ENCODE measurements at regions of chr5 and their contacts with region 1.

Region 1: DNA sequence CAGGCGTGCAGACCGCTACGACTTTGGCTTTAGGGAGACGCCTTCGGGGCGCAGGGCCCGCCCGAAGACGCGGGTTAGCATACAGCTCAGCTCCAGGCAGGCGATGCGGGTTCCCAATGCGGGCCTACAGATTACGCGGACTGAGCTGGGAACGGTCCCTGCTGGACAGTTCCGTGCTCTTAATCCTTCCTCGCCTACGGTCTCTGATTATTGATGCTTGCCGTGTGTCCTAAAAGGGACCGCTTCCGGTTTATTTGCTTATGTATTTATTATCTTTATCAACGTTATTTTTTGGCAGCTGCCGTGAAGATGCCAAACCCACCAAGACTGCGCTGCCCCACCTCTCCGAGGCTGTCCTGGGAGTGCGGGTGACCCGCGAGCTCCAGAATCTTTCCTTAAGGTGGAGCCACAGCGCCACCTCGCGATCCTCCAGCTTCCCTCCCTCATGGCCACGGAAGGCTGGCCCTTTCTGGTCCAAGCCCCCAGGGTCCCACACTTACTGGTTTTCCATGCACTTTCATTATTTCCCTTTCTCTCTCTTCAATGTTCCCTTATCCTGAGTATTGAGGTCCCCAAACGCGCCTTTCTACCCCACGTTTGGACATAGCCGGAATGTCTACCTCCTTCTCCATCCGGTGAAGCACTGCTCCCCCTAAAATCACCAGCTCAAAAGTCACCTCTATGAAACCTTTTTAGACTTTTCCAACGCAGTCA is 7.0 kb upstream of the EBF1 start:
- DNase-seq: peak; percentile 64
- H3K4me3 ChIP-seq: no peak overlapping the region
- H3K27ac ChIP-seq: no peak overlapping the region
- H3K4me1 ChIP-seq: no peaks in the 10 kb centered on the region
- H3K27me3 ChIP-seq: peaks cover 46 to 55% of the 10 kb centered on the region in 2 experiments
- CTCF ChIP-seq: peak; percentile 82 to 90
- POLR2A ChIP-seq: no peak

Region 2: DNA sequence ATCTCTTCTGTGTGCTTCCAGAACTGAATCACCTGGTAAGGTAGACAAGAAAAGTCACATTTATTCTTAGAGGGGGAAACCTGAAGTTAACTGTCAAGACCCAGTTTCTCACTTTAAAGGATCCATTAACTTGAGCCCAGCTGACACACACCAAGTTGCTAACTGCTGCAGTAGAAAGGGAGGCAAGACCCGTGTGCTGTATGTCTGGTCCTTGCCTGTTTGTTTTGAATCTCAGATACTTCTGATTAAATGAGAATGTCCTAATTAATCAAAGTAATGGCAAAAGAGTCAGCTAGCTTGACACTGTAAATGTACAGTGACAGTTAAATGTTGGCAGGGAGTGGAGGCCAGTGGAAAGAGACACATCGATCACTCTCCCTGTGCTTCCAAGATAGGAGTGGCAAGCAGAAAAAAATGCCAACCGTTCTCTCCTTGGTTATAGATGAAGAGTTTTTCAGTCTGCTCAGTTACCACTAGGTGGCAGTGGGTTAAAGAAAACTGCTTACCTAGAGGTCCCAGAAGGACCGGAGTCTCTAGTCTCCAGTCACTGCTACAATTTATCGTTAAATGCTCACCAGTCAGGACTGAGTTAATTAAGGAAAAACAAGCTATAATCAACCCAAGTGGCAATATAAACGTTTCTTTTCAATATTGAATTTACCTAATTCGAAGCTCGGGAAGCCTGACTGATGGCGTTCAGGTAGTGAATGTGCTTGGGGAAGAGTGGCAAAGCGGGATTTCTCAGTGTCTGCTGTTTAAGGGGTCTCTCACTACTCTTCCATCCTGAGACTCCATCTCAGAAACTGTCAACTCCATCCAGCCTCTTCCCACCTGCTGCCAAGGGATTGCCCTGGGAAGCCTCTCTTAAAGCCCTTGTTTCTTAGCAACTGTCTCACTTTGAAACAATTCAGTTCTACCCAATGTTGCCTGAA is 1344.8 kb before region 1 on chr5:
- CTCF ChIA-PET with region 1: interaction called, 8 read pairs
- POLR2A ChIA-PET with region 1: no interaction called
- dilution Hi-C with region 1: no loop called
- intact Hi-C with region 1: loop called (anchors 1 kb)
- DNase-seq: peak; percentile 67
- H3K4me3 ChIP-seq: no peak overlapping the region
- H3K27ac ChIP-seq: no peak overlapping the region
- H3K4me1 ChIP-seq: no peaks in the 10 kb centered on the region
- H3K27me3 ChIP-seq: no peaks in the 10 kb centered on the region
- CTCF ChIP-seq: peak; percentile 71 to 79
- POLR2A ChIP-seq: no peak

Region 3: DNA sequence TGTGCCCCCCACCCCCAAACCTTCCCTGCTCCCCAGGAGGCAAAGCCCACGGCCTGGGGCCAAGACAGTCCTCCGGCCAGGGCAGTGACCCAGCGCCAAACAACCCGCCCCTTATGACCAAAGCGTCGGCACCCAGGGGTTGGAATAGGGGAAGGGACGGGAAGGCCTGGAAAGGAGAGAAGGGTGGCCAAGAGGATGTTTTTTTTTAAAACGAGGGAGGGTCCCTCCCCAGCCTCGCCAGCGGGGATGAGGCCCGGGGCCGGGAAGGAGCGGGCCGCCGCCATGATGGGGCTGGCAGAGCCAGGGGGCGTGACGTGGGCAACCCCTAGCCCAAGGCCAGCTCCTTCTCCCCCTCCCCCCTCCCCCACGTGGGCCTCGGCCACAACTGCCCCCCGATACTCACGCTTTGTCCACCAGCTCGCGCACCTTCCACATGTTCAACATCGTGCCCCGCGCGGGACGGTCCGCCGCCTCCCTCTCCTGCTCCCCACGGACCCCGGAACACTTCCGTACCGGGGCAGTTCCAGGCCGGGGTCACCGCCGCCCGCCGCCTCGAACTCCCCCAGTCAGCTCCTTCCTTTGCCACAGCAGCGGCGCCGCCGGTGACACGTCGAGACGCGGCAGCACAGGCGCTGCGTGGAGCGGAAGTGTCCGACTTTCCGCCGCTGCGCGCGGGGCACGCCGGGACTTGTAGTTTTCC is 1248.0 kb before region 1 on chr5 and contains the start of gene CLINT1:
- CTCF ChIA-PET with region 1: interaction called, 23 read pairs
- POLR2A ChIA-PET with region 1: no interaction called
- dilution Hi-C with region 1: no loop called
- intact Hi-C with region 1: loop called (anchors 2 kb)
- DNase-seq: peak; percentile 86
- H3K4me3 ChIP-seq: peak within 1 kb of the TSS; percentile 68 to 95 (median 93)
- H3K27ac ChIP-seq: peak within 1 kb of the TSS; percentile 81
- H3K4me1 ChIP-seq: peaks cover 14% of the 10 kb centered on the region
- H3K27me3 ChIP-seq: no peaks in the 10 kb centered on the region
- CTCF ChIP-seq: no peak
- POLR2A ChIP-seq: peak; percentile 74
- total RNA-seq, gene CLINT1: 76.6 and 79.6 TPM in 2 replicates

Region 4: DNA sequence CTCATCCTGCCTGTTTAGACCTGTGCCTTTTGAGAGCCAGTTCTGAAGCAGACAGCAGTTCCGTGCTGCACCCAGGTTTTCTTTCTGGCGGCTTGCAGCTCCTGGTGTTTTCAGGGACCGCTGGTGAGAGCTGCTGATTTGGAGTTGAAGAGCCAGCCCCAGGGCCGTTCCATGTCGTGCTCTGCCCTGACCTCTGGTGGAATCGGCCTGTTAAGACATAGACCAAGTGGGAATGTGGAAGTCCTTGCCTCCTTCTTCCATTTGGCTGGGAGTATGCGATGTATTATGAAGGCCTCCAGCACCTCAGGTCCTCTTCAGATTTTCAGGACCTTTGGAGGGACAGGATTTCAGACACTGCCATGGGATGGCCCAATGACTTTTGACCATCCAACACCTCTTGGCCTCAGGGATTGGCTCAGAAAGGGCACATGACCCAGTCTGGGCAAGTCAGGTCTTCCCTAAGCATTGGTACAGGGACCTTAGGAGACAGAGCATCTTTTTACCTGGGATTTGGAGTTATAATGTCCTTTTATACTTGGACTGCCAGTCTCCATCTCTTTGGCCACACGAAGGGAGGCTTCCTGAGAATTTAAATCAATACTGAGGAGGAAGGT is 1111.7 kb before region 1 on chr5:
- CTCF ChIA-PET with region 1: interaction called, 11 read pairs
- POLR2A ChIA-PET with region 1: no interaction called
- dilution Hi-C with region 1: no loop called
- intact Hi-C with region 1: loop called (anchors 5 kb)
- DNase-seq: peak; percentile 63
- H3K4me3 ChIP-seq: no peak overlapping the region
- H3K27ac ChIP-seq: no peak overlapping the region
- H3K4me1 ChIP-seq: no peaks in the 10 kb centered on the region
- H3K27me3 ChIP-seq: no peaks in the 10 kb centered on the region
- CTCF ChIP-seq: peak; percentile 63 to 79
- POLR2A ChIP-seq: no peak

Region 5: GRCh38 chr5:158174918-158175851 is 931.5 kb before region 1 on chr5:
- CTCF ChIA-PET with region 1: interaction called, 266 read pairs
- POLR2A ChIA-PET with region 1: interaction called, 3 read pairs
- dilution Hi-C with region 1: no loop called
- intact Hi-C with region 1: loop called (anchors 1 kb)
- DNase-seq: peak; percentile 72
- H3K4me3 ChIP-seq: no peak overlapping the region
- H3K27ac ChIP-seq: no peak overlapping the region
- H3K4me1 ChIP-seq: no peaks in the 10 kb centered on the region
- H3K27me3 ChIP-seq: peaks cover 0 to 2% of the 10 kb centered on the region in 2 experiments
- CTCF ChIP-seq: peak; percentile 69 to 80
- POLR2A ChIP-seq: no peak

Region 6: DNA sequence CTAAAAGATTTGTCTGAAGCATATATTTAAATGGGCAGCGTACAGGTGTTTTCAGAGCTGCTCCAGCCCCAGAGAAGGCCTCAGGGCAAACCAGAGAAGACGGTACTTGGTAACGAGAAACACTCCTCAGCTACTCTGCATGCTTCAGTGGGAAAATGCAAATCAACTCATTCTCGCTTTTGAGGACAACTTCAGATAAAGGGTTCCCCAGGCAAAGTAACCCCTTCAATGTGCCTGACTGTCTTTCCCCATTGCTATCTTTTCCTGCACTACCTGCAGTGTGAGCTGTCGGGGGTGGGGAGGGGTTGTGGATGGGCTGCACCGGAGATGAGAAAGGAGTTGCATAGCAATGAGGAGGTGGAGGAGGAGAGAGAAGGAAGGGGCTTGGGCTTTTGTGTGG is 908.1 kb before region 1 on chr5:
- CTCF ChIA-PET with region 1: no interaction called
- POLR2A ChIA-PET with region 1: no interaction called
- dilution Hi-C with region 1: no loop called
- intact Hi-C with region 1: no loop called
- DNase-seq: no peak
- H3K4me3 ChIP-seq: no peak overlapping the region
- H3K27ac ChIP-seq: no peak overlapping the region
- H3K4me1 ChIP-seq: no peaks in the 10 kb centered on the region
- H3K27me3 ChIP-seq: no peaks in the 10 kb centered on the region
- CTCF ChIP-seq: no peak
- POLR2A ChIP-seq: no peak

Region 7: DNA sequence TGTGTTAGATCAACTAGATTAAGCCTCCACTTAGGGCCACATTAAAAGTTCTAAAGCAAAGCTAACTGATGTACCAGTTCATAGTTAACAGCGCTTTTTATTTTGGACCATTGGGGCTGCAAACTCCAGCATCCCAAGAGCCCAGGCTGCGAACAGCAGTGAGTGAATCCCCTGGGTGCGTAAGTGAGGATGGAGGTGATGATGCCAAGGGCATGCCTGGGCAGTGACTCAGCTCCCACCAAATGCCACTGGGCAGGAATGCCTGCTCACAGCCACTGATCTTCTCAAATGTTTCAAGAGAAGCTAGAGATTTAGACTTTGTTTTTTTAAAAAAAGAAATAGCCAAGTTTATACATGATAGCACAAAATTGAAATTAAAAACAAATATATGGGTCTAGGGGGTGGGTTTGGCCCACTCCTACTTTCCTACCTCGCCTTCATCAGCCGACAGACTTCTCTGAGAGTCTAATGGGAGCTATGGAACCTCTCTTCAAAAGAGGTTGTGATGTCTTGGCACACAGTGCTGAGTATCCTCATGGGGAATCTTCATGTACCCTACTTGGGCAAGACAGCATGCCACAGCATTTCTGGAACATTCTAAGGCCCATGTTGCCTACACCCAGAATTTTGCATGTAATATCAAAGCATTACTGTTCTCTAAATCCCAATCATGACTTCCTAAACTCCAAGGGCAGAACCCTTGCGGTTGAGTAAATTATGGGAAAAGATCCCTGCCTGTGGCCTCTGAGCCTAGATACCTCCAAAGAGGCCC is 405.1 kb before region 1 on chr5:
- CTCF ChIA-PET with region 1: interaction called, 455 read pairs
- POLR2A ChIA-PET with region 1: interaction called, 3 read pairs
- dilution Hi-C with region 1: no loop called
- intact Hi-C with region 1: no loop called
- DNase-seq: no peak
- H3K4me3 ChIP-seq: no peak overlapping the region
- H3K27ac ChIP-seq: no peak overlapping the region
- H3K4me1 ChIP-seq: no peaks in the 10 kb centered on the region
- H3K27me3 ChIP-seq: no peaks in the 10 kb centered on the region
- CTCF ChIP-seq: no peak
- POLR2A ChIP-seq: no peak

Region 8: GRCh38 chr5:158824241-158824882 is 282.4 kb before region 1 on chr5:
- CTCF ChIA-PET with region 1: no interaction called
- POLR2A ChIA-PET with region 1: no interaction called
- dilution Hi-C with region 1: no loop called
- intact Hi-C with region 1: no loop called
- DNase-seq: no peak
- H3K4me3 ChIP-seq: no peak overlapping the region
- H3K27ac ChIP-seq: no peak overlapping the region
- H3K4me1 ChIP-seq: no peaks in the 10 kb centered on the region
- H3K27me3 ChIP-seq: no peaks in the 10 kb centered on the region
- CTCF ChIP-seq: no peak
- POLR2A ChIP-seq: no peak

Region 9: GRCh38 chr5:159094745-159095144 is 12.0 kb before region 1 on chr5:
- CTCF ChIA-PET with region 1: interaction called, 14 read pairs
- POLR2A ChIA-PET with region 1: no interaction called
- dilution Hi-C with region 1: no loop called
- intact Hi-C with region 1: no loop called
- DNase-seq: peak; percentile 11
- H3K4me3 ChIP-seq: no peak overlapping the region
- H3K27ac ChIP-seq: no peak overlapping the region
- H3K4me1 ChIP-seq: peaks cover 8% of the 10 kb centered on the region
- H3K27me3 ChIP-seq: peaks cover 32 to 33% of the 10 kb centered on the region in 2 experiments
- CTCF ChIP-seq: no peak
- POLR2A ChIP-seq: no peak